ENCODE measurements at regions of chr14 and their contacts with region 1.

Region 1: DNA sequence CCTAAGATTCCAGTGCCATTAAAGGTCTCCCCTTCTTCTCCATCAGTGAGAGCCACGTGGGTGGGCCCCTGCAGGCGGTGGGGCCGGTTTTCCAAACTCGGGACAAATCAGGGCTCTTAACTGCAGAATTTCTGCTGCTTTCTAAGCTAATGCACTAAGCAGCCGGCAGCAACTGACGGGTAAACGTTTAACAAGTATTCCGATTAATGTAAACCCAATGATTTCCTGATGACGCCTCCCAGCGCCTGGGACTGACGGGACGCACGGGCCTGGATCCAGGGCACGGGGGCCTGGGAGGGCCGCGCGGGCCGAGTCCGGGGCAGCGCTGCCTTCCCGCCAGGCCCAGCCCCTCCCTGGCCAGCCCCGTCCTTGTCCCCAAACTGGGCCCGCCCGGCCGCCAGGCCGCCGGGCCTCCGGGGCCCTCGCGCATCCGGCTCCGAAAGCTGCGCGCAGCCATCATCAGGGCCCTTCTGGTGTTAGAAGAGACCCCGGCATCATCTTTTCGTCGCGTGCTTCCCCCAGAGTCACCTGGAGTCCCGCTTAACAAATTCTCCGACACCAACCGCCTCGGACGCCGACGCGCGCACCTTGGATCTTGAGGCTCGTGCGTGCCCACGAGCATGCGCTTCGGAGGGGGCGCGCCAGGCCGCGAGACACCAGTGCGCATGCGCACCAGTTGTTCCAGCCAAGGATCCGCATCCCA is at the start of gene MLH3:
- DNase-seq: peak; percentile 77
- H3K4me3 Mint-ChIP-seq: peak within 1 kb of the TSS; percentile 92
- H3K27ac Mint-ChIP-seq: peak within 1 kb of the TSS; percentile 86
- H3K4me1 Mint-ChIP-seq: peaks cover 66% of the 10 kb centered on the region
- H3K27me3 Mint-ChIP-seq: no peaks in the 10 kb centered on the region
- total RNA-seq, gene MLH3: 17.3 to 18.5 TPM

Region 2: DNA sequence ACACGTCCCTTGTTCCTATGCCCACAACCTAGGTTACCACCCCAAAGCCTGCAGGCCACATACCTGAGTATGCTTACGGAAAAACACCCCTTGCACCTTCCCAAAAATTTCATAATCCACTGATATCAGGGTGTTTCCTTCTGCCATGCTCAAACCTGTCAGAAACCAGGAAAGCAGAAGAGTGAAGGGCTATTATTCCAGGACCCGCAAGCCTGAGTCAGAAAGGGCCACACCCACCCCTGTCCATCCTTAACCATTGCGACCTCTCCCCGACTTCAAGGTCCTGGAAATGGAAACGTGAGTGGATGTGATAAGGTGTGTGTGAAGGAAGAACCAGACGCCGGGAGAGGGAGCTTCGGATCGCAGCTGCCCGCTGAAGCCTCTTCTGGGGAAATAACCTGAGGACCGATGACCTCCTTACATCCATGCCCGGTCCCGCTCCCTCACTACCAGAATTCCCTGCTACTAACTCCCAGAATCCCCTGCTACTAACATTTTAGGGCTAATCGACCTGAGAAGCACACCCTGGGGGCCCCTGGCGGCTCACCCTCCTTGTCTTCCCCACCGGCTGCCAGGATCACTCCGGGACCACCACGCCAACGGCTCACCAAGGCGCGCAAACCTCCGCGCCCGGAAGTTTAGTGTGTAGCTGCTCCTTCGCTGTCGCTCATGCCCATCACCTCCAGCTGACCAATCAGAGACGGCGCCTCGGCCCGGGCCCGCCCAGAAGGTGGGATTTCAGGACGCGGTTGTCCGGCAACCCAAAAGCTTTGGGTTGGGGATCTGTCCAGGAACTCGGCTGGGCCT is 12.6 kb after region 1 on chr14 and contains the start of gene ACYP1:
- CTCF ChIA-PET with region 1: interaction called, 4 read pairs
- intact Hi-C with region 1: loop called (anchors 1 kb)
- DNase-seq: peak; percentile 96
- H3K4me3 Mint-ChIP-seq: peak within 1 kb of the TSS; percentile 99
- H3K27ac Mint-ChIP-seq: peak within 1 kb of the TSS; percentile 94
- H3K4me1 Mint-ChIP-seq: peaks cover 23% of the 10 kb centered on the region
- H3K27me3 Mint-ChIP-seq: no peaks in the 10 kb centered on the region
- total RNA-seq, gene ACYP1: 46.3 to 50.5 TPM

Region 3: DNA sequence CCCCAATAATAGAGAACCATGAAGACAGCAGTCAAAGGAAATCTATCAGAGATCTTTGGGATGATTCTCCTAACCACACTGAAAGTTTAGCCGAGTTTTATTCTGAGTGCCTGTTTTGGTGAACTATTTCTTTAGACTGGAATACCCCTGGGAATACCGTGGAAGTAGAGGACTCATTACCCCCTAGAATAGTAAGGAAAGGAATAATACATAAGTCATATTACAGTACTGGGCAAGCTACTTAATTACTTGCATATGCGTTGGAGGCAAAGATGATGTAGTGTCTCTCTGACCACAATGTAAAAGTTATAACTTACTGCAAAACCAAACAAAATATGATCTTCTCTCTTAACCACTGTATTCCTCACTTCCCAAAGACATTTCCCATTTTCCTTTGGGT is 43.9 kb after region 1 on chr14:
- CTCF ChIA-PET with region 1: no interaction called
- intact Hi-C with region 1: no loop called
- DNase-seq: no peak
- H3K4me3 Mint-ChIP-seq: no peak overlapping the region
- H3K27ac Mint-ChIP-seq: no peak overlapping the region
- H3K4me1 Mint-ChIP-seq: no peaks in the 10 kb centered on the region
- H3K27me3 Mint-ChIP-seq: no peaks in the 10 kb centered on the region

Region 4: GRCh38 chr14:75126679-75127473 is 75.9 kb after region 1 on chr14 and contains the start of gene NEK9:
- CTCF ChIA-PET with region 1: interaction called, 3 read pairs
- intact Hi-C with region 1: loop called (anchors 2 kb)
- DNase-seq: peak; percentile 92
- H3K4me3 Mint-ChIP-seq: peak within 1 kb of the TSS; percentile 96
- H3K27ac Mint-ChIP-seq: peak within 1 kb of the TSS; percentile 97
- H3K4me1 Mint-ChIP-seq: peaks cover 40% of the 10 kb centered on the region
- H3K27me3 Mint-ChIP-seq: no peaks in the 10 kb centered on the region
- total RNA-seq, gene NEK9: 53.5 to 55.6 TPM

Region 5: DNA sequence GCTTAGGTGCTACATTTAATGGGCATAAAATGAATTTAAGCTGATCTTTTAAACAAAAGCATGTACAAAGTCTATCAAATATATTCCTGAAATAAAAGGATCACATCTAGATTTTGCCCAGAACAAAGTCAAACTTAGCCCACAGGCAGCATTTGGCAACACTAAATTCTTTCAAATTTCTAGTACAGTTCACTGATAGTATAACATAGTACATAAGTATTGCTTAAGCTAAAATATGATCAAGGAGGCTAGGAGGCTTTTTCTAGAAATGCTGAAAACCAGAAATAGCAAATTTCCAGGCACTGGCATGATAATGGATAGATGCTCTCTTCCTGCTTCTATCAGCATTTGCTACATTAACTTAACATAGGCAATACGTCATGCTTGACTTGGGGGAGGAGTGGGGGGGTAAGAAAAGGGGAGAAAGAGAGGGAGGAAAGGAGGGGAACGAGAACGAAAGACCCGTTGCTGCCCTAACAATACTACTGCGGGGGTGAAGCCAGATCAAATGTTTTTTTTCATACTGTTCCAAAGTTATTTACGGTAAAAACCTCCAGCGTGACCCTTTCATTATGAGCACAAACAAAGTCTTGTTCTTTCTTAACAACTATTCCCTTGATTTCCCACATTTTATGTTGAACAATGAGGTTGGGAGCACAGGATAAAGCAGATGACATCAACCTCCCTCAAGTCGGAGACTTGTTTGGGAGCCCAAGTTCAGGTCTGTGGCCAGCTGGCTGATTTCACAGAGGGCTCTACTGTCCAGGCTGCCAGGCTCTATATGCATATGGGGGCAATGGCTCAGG is 114.8 kb after region 1 on chr14:
- CTCF ChIA-PET with region 1: no interaction called
- intact Hi-C with region 1: no loop called
- DNase-seq: no peak
- H3K4me3 Mint-ChIP-seq: no peak overlapping the region
- H3K27ac Mint-ChIP-seq: no peak overlapping the region
- H3K4me1 Mint-ChIP-seq: peaks cover 61% of the 10 kb centered on the region
- H3K27me3 Mint-ChIP-seq: no peaks in the 10 kb centered on the region